Activated naive CD4-positive, alpha-beta T cell treated with anti-CD3 and anti-CD28 coated beads for 36 hours (primary cell): ENCODE measurements at regions of chr11 and their contacts with region 1.

Region 1: DNA sequence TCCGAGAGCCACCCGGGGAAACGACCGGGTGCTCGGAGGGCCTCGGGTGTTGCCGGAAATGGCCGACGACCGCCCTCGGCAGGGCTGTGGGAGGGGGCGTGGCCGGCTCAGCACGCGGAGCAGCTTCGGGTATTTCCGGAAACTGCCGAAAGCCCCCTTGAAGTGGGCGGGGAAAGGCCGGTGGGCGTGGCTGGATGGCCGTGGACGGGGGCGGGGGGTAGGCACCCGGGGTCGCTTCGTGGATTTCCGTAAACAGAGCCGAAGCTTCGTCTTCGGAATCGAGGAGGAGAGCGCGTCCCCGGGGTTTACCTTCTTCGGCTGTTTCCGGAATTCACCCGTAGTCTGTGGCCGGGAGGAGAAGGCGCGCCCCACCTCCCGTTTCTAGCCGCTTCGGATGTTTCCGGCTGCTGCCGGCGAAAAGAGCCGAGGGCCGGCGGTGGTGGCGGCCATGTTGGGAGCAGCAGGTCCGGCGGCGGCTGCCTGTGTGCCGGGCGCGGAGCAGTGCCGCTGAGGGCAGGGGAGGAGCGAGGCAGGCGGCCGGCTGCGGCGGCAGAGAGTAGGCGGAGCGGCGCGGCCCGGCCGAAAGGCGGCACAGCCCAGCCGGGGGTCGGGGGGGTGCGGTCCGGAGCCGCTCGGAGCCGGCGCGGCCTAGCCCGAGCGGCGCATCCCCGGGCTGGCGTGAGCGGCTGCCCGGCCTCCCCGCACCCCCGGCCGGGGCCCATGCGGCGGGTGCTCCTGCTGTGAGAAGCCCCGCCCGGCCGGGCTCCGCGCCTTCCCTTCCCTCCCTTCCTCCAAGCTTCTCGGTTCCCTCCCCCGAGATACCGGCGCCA is at the start of gene MARK2:
- DNase-seq: peak; percentile 100
- H3K4me3 Mint-ChIP-seq: peak within 1 kb of the TSS; percentile 97
- H3K27ac Mint-ChIP-seq: peak within 1 kb of the TSS; percentile 65
- H3K4me1 Mint-ChIP-seq: peaks cover 48% of the 10 kb centered on the region
- H3K27me3 Mint-ChIP-seq: no peaks in the 10 kb centered on the region
- total RNA-seq, gene MARK2: 15.8 to 17.6 TPM

Region 2: DNA sequence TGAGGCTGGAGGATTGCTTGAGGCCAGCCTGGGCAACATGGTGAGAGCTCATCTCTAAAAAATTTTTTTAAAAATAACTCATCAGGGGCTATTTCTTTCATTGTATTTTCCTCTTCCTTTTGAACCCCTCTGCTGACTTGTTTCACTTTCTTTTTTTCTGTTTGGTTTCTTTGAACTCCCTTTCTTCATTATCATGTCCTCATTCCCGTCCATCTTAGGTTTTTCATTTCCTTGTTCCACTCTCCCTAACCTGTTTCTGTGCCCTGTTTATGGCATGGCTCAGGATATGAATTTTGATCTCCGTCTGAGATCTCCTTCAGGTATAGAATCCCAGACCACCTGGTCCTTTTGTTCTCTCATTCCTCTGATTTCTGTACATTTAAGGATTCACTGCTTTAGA is 12.5 kb after region 1 on chr11:
- CTCF ChIA-PET with region 1: interaction called, 11 read pairs
- intact Hi-C with region 1: loop called (anchors 1 kb)
- DNase-seq: no peak
- H3K4me3 Mint-ChIP-seq: peak overlapping the region; percentile 10
- H3K27ac Mint-ChIP-seq: peak overlapping the region; percentile 26
- H3K4me1 Mint-ChIP-seq: peaks cover 65% of the 10 kb centered on the region
- H3K27me3 Mint-ChIP-seq: no peaks in the 10 kb centered on the region

Region 3: DNA sequence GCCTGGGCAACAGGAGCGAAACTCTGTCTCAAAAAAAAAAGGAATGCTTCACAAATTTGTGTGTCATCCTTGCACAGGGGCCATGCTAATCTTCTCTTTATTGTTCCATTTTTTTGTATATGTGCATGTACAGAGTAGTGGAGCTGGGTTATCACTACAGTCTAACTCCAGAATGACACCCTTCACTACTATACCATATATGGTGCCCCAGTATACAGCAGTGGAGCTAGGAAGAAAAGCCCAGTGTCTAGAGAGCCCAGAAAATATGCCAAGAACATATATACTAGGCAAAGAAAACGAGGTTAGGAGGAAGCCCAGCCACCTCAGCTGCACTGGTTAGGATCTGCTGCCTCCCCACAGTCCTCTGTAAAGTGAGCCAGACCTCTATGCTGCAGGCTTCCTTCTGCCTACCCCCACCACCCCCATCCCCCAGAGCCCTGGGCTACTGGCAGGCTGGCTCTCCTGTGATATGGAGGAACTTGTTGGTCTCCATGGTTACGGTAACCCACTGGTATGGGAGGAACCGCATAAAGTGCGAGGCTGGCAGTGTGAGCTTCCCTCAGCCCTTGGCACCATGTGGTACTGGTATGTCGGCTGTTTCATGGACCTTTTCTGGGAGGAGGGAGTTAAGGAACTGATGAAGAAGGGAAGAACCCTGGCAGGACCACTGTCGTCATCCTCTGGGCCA is 43.8 kb after region 1 on chr11:
- CTCF ChIA-PET with region 1: interaction called, 18 read pairs
- intact Hi-C with region 1: loop called (anchors 5 kb)
- DNase-seq: no peak
- H3K4me3 Mint-ChIP-seq: no peak overlapping the region
- H3K27ac Mint-ChIP-seq: no peak overlapping the region
- H3K4me1 Mint-ChIP-seq: peaks cover 82% of the 10 kb centered on the region
- H3K27me3 Mint-ChIP-seq: no peaks in the 10 kb centered on the region

Region 4: DNA sequence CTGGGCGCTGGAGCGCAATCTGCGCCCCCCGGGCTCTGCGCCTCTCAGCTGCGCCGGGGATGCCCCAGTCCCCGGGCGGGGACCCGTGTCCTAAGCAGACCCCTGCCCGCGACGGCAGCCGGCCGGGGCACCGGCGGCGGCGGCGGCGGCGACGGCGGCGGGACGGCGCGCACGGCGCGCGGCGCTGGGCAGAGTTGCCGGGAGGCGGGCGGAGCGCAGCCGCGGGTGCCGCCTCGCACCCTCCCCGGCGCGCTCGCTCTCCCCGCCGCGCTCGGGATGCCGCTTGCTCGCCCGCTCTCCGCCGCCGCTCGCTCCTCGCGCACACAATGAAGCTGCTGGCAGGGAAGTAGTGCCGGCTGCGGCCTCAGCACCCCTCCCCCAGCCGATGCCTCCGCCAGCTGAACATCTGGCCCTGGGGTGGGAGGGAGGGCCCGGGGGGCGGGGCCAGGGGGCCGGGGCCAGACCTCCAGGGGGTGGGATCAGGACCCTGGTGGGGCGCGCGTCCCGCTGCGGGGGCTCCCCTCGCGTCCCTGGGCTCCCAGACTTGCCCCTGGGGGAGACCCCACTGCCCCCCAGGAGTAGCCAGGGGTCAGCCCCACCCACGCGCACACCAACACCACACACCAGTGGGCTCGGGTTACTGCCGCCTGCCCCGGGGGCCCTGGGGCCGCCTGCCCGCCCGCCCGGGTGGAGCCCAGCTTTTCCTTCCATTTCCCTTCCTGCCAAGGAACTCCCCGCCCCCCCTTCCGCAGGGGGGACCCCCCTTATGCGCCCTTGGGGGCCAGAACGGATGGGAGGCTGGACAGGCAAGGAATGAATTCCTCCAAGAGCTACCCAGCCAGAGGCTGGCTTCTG is 78.2 kb after region 1 on chr11 and contains the start of gene RCOR2:
- CTCF ChIA-PET with region 1: interaction called, 41 read pairs
- intact Hi-C with region 1: loop called (anchors 1 kb)
- DNase-seq: peak; percentile 63
- H3K4me3 Mint-ChIP-seq: peak within 1 kb of the TSS; percentile 79
- H3K27ac Mint-ChIP-seq: no peak within 1 kb of the TSS
- H3K4me1 Mint-ChIP-seq: peaks cover 15% of the 10 kb centered on the region
- H3K27me3 Mint-ChIP-seq: no peaks in the 10 kb centered on the region
- total RNA-seq, gene RCOR2: 0.17 to 0.19 TPM

Region 5: GRCh38 chr11:63945477-63946163 is 106.7 kb after region 1 on chr11:
- CTCF ChIA-PET with region 1: interaction called, 82 read pairs
- intact Hi-C with region 1: loop called (anchors 1 kb)
- DNase-seq: peak; percentile 65
- H3K4me3 Mint-ChIP-seq: no peak overlapping the region
- H3K27ac Mint-ChIP-seq: no peak overlapping the region
- H3K4me1 Mint-ChIP-seq: peaks cover 3% of the 10 kb centered on the region
- H3K27me3 Mint-ChIP-seq: no peaks in the 10 kb centered on the region

Region 6: GRCh38 chr11:64000026-64000739 is 161.3 kb after region 1 on chr11:
- CTCF ChIA-PET with region 1: interaction called, 11 read pairs
- intact Hi-C with region 1: no loop called
- DNase-seq: peak; percentile 72
- H3K4me3 Mint-ChIP-seq: no peak overlapping the region
- H3K27ac Mint-ChIP-seq: no peak overlapping the region
- H3K4me1 Mint-ChIP-seq: peaks cover 5% of the 10 kb centered on the region
- H3K27me3 Mint-ChIP-seq: peaks cover 6% of the 10 kb centered on the region

Region 7: GRCh38 chr11:64240394-64241174 is 401.7 kb after region 1 on chr11 and contains the start of gene FKBP2:
- CTCF ChIA-PET with region 1: no interaction called
- intact Hi-C with region 1: loop called (anchors 2 kb)
- DNase-seq: peak; percentile 97
- H3K4me3 Mint-ChIP-seq: peak within 1 kb of the TSS; percentile 92
- H3K27ac Mint-ChIP-seq: peak within 1 kb of the TSS; percentile 98
- H3K4me1 Mint-ChIP-seq: peaks cover 35% of the 10 kb centered on the region
- H3K27me3 Mint-ChIP-seq: no peaks in the 10 kb centered on the region
- total RNA-seq, gene FKBP2: 17.2 to 20.0 TPM